ENCODE measurements at regions of chr9 and their contacts with region 1.

Region 1: GRCh38 chr9:19028835-19029451 is 4.1 kb downstream of the SAXO1 start:
- DNase-seq: peak; percentile 50
- ATAC-seq: peak; percentile 63
- H3K4me3 Mint-ChIP-seq: no peak overlapping the region
- H3K27ac Mint-ChIP-seq: no peak overlapping the region
- H3K4me1 Mint-ChIP-seq: peaks cover 7% of the 10 kb centered on the region
- H3K27me3 Mint-ChIP-seq: peaks cover 10% of the 10 kb centered on the region

Region 2: DNA sequence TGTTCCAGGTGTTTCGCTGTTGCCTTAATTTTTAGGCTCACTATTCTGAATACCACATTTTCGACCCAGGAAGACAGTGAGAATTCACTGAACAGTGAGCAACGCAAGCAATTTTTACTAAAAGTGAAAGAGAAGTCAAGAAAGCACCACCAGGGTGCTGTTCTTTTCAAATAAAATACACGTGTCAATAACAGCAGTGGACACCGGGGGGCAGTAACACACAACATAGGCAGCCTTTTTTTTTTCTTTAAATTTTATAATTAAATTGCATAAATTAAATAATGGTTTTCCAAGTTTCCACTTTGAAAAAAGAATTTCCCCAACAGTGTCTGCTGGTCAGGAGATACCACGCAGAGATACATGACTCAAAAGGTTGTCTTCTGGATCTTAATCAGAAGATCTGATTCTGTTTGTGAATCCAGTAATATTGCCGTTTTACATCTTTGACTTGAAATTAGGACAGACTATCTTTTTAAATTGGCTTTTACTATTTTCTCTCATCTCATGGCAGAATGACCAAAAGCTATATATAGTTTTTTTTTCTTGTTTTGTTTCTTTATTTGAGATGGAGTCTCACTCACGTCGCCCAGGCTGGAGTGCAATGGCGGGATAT is 1497.2 kb before region 1 on chr9:
- CTCF ChIA-PET with region 1: interaction called, 3 read pairs
- POLR2A ChIA-PET with region 1: no interaction called
- intact Hi-C with region 1: loop called in 1 of 2 experiments (anchors 5 kb)
- DNase-seq: peak; percentile 61
- ATAC-seq: no peak
- H3K4me3 Mint-ChIP-seq: no peak overlapping the region
- H3K27ac Mint-ChIP-seq: no peak overlapping the region
- H3K4me1 Mint-ChIP-seq: no peaks in the 10 kb centered on the region
- H3K27me3 Mint-ChIP-seq: no peaks in the 10 kb centered on the region

Region 3: GRCh38 chr9:17810728-17811571 is 1218.0 kb before region 1 on chr9:
- CTCF ChIA-PET with region 1: interaction called, 3 read pairs
- POLR2A ChIA-PET with region 1: no interaction called
- intact Hi-C with region 1: loop called in 1 of 2 experiments (anchors 2 kb)
- DNase-seq: peak; percentile 63
- ATAC-seq: no peak
- H3K4me3 Mint-ChIP-seq: no peak overlapping the region
- H3K27ac Mint-ChIP-seq: no peak overlapping the region
- H3K4me1 Mint-ChIP-seq: no peaks in the 10 kb centered on the region
- H3K27me3 Mint-ChIP-seq: no peaks in the 10 kb centered on the region

Region 4: GRCh38 chr9:18255158-18255629 is 773.7 kb before region 1 on chr9:
- CTCF ChIA-PET with region 1: interaction called, 30 read pairs
- POLR2A ChIA-PET with region 1: no interaction called
- intact Hi-C with region 1: loop called (anchors 1 to 2 kb)
- DNase-seq: peak; percentile 87
- ATAC-seq: peak; percentile 77
- H3K4me3 Mint-ChIP-seq: no peak overlapping the region
- H3K27ac Mint-ChIP-seq: no peak overlapping the region
- H3K4me1 Mint-ChIP-seq: peaks cover 1% of the 10 kb centered on the region
- H3K27me3 Mint-ChIP-seq: peaks cover 18% of the 10 kb centered on the region

Region 5: GRCh38 chr9:18678821-18679590 is 349.9 kb before region 1 on chr9:
- CTCF ChIA-PET with region 1: no interaction called
- POLR2A ChIA-PET with region 1: no interaction called
- intact Hi-C with region 1: loop called in 1 of 2 experiments (anchors 10 kb)
- DNase-seq: no peak
- ATAC-seq: no peak
- H3K4me3 Mint-ChIP-seq: no peak overlapping the region
- H3K27ac Mint-ChIP-seq: no peak overlapping the region
- H3K4me1 Mint-ChIP-seq: no peaks in the 10 kb centered on the region
- H3K27me3 Mint-ChIP-seq: no peaks in the 10 kb centered on the region

Region 6: GRCh38 chr9:18791074-18791473 is 237.9 kb before region 1 on chr9:
- CTCF ChIA-PET with region 1: no interaction called
- POLR2A ChIA-PET with region 1: no interaction called
- intact Hi-C with region 1: loop called in 1 of 2 experiments (anchors 10 kb)
- DNase-seq: peak; percentile 4
- ATAC-seq: no peak
- H3K4me3 Mint-ChIP-seq: no peak overlapping the region
- H3K27ac Mint-ChIP-seq: no peak overlapping the region
- H3K4me1 Mint-ChIP-seq: no peaks in the 10 kb centered on the region
- H3K27me3 Mint-ChIP-seq: peaks cover 2% of the 10 kb centered on the region

Region 7: DNA sequence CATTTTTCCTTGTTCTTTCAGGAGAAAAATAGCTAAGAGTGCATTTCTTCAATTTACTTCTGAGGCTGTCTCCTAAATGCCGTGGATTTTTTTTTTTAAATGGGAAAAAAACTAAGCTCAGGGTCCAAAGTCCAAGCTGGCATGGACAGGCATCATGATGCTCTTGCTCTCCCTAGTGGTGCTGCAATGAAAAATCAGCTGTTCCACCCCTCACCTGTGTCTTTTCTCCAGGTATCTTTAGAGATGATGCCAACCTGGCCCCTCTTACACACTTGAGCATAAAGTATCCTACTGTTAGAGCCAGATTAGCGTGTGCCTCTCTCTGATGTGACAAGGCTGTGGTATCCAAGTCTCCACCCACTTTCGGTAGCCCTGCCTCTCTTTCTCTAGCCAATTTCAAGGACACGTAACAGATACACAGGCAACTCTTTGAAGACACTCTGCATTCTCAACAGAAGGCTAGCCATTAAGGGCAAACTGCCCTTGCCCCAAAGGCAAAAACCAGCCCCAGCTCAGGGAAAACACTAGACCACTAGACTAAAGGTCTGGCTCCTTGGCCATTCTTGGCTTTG is 204.8 kb before region 1 on chr9:
- CTCF ChIA-PET with region 1: no interaction called
- POLR2A ChIA-PET with region 1: no interaction called
- intact Hi-C with region 1: no loop called
- DNase-seq: no peak
- ATAC-seq: no peak
- H3K4me3 Mint-ChIP-seq: no peak overlapping the region
- H3K27ac Mint-ChIP-seq: no peak overlapping the region
- H3K4me1 Mint-ChIP-seq: peaks cover 15% of the 10 kb centered on the region
- H3K27me3 Mint-ChIP-seq: no peaks in the 10 kb centered on the region

Region 8: GRCh38 chr9:19074836-19075235 is 45.9 kb after region 1 on chr9:
- CTCF ChIA-PET with region 1: no interaction called
- POLR2A ChIA-PET with region 1: no interaction called
- intact Hi-C with region 1: no loop called
- DNase-seq: no peak
- ATAC-seq: no peak
- H3K4me3 Mint-ChIP-seq: no peak overlapping the region
- H3K27ac Mint-ChIP-seq: no peak overlapping the region
- H3K4me1 Mint-ChIP-seq: no peaks in the 10 kb centered on the region
- H3K27me3 Mint-ChIP-seq: no peaks in the 10 kb centered on the region